Activated CD8-positive, alpha-beta T cell treated with anti-CD3 and anti-CD28 coated beads, Interleukin-2, amount 10 ng/mL, durations not matched to agents 7 days and 5 days (primary cell): ENCODE measurements at regions of chr1 and their contacts with region 1.

Region 1: GRCh38 chr1:201016211-201016651 is 7.3 kb downstream of the KIF21B start:
- DNase-seq: no peak
- ATAC-seq: no peak
- H3K4me3 Mint-ChIP-seq: peak overlapping the region; percentile 65
- H3K27ac Mint-ChIP-seq: peak overlapping the region; percentile 100
- H3K4me1 Mint-ChIP-seq: peaks cover 97% of the 10 kb centered on the region
- H3K27me3 Mint-ChIP-seq: no peaks in the 10 kb centered on the region

Region 2: GRCh38 chr1:201042779-201043461 is 26.7 kb after region 1 on chr1:
- CTCF ChIA-PET with region 1: interaction called, 99 read pairs
- POLR2A ChIA-PET with region 1: no interaction called
- DNase-seq: peak; percentile 79
- ATAC-seq: peak; percentile 91
- H3K4me3 Mint-ChIP-seq: no peak overlapping the region
- H3K27ac Mint-ChIP-seq: no peak overlapping the region
- H3K4me1 Mint-ChIP-seq: no peaks in the 10 kb centered on the region
- H3K27me3 Mint-ChIP-seq: peaks cover 22% of the 10 kb centered on the region

Region 3: DNA sequence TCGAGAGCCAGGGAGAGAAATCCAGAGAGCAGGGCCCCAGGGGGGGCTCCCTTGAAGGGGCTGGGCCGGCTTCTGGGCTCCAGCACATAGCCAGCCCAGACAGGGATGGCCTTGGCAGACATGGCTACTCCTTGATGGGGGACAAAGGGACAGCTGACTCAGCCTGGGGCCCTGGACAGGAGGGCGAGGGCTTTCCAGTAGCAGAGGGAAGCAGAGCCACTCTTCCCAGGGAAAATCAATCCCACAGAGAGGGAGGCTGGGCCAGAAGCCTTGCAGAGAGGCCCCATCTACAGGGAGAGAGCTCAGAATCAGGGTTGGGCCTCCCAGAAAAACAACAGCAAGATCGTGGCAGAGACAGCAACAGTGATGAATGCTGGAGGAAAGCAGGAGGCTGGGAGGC is 189.9 kb after region 1 on chr1:
- CTCF ChIA-PET with region 1: no interaction called
- POLR2A ChIA-PET with region 1: no interaction called
- DNase-seq: no peak
- ATAC-seq: no peak
- H3K4me3 Mint-ChIP-seq: no peak overlapping the region
- H3K27ac Mint-ChIP-seq: no peak overlapping the region
- H3K4me1 Mint-ChIP-seq: no peaks in the 10 kb centered on the region
- H3K27me3 Mint-ChIP-seq: peaks cover 15% of the 10 kb centered on the region